Caco-2 (cell line): ENCODE measurements at regions of chr1 and their contacts with region 1.

Region 1: GRCh38 chr1:68442822-68443556 is 6.8 kb downstream of the RPE65 start:
- DNase-seq: peak in 1 of 2 experiments; percentile 35
- H3K4me3 ChIP-seq: no peak overlapping the region
- H3K4me3 Mint-ChIP-seq: no peak overlapping the region
- H3K27ac Mint-ChIP-seq: no peak overlapping the region
- H3K4me1 ChIP-seq: no peaks in the 10 kb centered on the region
- H3K4me1 Mint-ChIP-seq: peaks cover 6% of the 10 kb centered on the region
- H3K27me3 ChIP-seq: no peaks in the 10 kb centered on the region
- H3K27me3 Mint-ChIP-seq: peaks cover 12% of the 10 kb centered on the region
- CTCF ChIP-seq: peak; percentile 32 to 34

Region 2: GRCh38 chr1:67991546-67991945 is 451.4 kb before region 1 on chr1:
- CTCF ChIA-PET with region 1: no interaction called
- POLR2A ChIA-PET with region 1: no interaction called
- intact Hi-C with region 1: no loop called
- DNase-seq: no peak
- H3K4me3 ChIP-seq: no peak overlapping the region
- H3K4me3 Mint-ChIP-seq: no peak overlapping the region
- H3K27ac Mint-ChIP-seq: no peak overlapping the region
- H3K4me1 ChIP-seq: no peaks in the 10 kb centered on the region
- H3K4me1 Mint-ChIP-seq: no peaks in the 10 kb centered on the region
- H3K27me3 ChIP-seq: no peaks in the 10 kb centered on the region
- H3K27me3 Mint-ChIP-seq: no peaks in the 10 kb centered on the region
- CTCF ChIP-seq: no peak

Region 3: GRCh38 chr1:68321084-68321685 is 121.8 kb before region 1 on chr1:
- CTCF ChIA-PET with region 1: no interaction called
- POLR2A ChIA-PET with region 1: no interaction called
- intact Hi-C with region 1: loop called (anchors 1 kb)
- DNase-seq: peak; percentile 70 to 74
- H3K4me3 ChIP-seq: no peak overlapping the region
- H3K4me3 Mint-ChIP-seq: no peak overlapping the region
- H3K27ac Mint-ChIP-seq: no peak overlapping the region
- H3K4me1 ChIP-seq: no peaks in the 10 kb centered on the region
- H3K4me1 Mint-ChIP-seq: no peaks in the 10 kb centered on the region
- H3K27me3 ChIP-seq: no peaks in the 10 kb centered on the region
- H3K27me3 Mint-ChIP-seq: no peaks in the 10 kb centered on the region
- CTCF ChIP-seq: peak; percentile 46 to 81

Region 4: GRCh38 chr1:70382682-70383081 is 1939.7 kb after region 1 on chr1:
- CTCF ChIA-PET with region 1: no interaction called
- POLR2A ChIA-PET with region 1: no interaction called
- intact Hi-C with region 1: loop called (anchors 10 kb)
- DNase-seq: no peak
- H3K4me3 ChIP-seq: no peak overlapping the region
- H3K4me3 Mint-ChIP-seq: no peak overlapping the region
- H3K27ac Mint-ChIP-seq: no peak overlapping the region
- H3K4me1 ChIP-seq: no peaks in the 10 kb centered on the region
- H3K4me1 Mint-ChIP-seq: no peaks in the 10 kb centered on the region
- H3K27me3 ChIP-seq: no peaks in the 10 kb centered on the region
- H3K27me3 Mint-ChIP-seq: no peaks in the 10 kb centered on the region
- CTCF ChIP-seq: no peak